ENCODE measurements at regions of chr5 and their contacts with region 1.

Region 1: DNA sequence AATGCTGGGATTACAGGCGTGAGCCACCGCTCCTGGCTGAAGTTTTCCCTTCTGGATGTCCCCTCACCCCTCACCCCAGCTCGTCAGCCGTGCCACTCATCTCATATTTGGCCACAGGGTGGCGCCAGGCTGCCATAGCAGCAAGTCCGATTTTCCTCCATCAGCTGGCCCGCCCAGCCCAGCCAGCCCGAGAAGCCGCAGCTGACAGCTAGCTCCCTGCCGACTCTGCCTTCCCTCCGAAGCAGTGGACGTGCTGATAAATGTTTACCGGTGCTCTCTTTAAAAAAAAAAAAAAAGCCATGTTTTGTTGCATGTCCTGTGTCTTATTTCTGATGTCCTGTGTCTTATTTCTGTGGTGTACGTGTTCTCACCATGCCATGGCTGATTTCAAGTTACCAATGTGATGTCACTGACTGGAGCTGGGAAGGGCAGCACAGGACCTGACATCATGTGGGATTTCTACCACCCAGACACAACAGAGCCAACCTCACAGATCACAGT is 58.3 kb downstream of the PFDN1 start:
- DNase-seq: peak; percentile 84 to 95
- H3K4me3 ChIP-seq: no peak overlapping the region
- H3K27ac ChIP-seq: no peak overlapping the region; the same call in 1 of the 2 replicates
- H3K4me1 ChIP-seq: peaks cover 6 to 17% (median 12%) of the 10 kb centered on the region in 4 experiments; a peak in 6 of 7 replicates
- H3K27me3 ChIP-seq: no peaks in the 10 kb centered on the region
- CTCF ChIP-seq: peak in 2 of 3 experiments; percentile 88 to 91; a peak in 3 of 4 replicates
- EP300 ChIP-seq: no peak
- POLR2A ChIP-seq: no peak
- RAD21 ChIP-seq: peak; percentile 91 to 95

Region 2: DNA sequence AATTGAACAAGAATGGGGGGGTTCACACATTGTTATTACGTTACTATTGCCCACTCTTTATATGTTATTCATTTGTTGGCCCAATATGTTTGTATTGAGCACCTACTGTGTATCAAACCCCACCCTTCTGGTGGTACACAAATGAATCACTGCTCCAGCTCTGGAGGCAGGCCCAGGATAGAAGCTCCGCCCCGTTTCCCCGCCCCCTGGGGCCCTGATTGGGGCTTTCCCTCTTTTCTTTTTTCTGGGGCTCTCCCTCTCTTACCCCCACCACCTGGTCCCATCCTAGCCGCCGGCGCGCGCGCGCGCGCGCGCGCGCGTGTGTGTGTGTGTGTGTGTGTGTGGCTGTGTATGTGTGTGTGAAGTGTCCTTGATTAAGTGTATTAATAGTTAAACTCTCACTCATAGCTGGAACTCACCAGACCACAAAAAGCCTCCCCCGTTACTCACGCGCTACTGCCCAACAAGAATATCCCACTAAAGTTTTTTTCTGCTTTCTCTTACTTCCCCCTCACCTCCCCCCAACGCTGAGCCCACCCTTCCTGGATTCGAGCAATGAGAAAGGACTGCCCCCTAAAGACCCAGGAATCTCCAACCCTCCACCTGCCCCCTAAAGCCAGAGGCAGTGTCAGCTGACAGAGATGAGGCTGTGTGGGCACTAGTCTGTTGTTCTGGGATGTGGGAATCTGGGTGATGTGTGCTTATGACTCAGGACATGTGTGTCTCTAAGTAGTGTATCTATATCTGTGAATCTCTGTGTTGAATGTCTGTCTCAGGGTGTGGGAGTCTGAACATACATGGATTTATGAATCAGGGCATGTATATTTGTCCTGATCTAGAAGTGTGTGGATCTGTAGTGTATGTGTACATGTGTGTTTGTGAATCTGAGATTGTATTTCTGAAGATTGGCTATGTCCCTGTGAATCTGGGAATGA is 592.5 kb before region 1 on chr5:
- CTCF ChIA-PET with region 1: no interaction called
- POLR2A ChIA-PET with region 1: no interaction called
- DNase-seq: peak in 1 of 2 experiments; percentile 90
- H3K4me3 ChIP-seq: peak overlapping the region in 3 of 4 experiments; percentile 2 to 90 (median 14); a peak in 5 of 8 replicates
- H3K27ac ChIP-seq: no peak overlapping the region
- H3K4me1 ChIP-seq: peaks cover 20 to 53% (median 50%) of the 10 kb centered on the region in 4 experiments
- H3K27me3 ChIP-seq: peaks cover 0 to 4% (median 0%) of the 10 kb centered on the region in 4 experiments; a peak in 2 of 7 replicates
- CTCF ChIP-seq: no peak
- EP300 ChIP-seq: no peak
- POLR2A ChIP-seq: no peak
- RAD21 ChIP-seq: no peak

Region 3: GRCh38 chr5:140169410-140169809 is 75.2 kb before region 1 on chr5:
- CTCF ChIA-PET with region 1: interaction called, 10 read pairs
- POLR2A ChIA-PET with region 1: interaction called, 3 read pairs
- DNase-seq: no peak
- H3K4me3 ChIP-seq: no peak overlapping the region
- H3K27ac ChIP-seq: no peak overlapping the region
- H3K4me1 ChIP-seq: peaks cover 0 to under 1% (median 0%) of the 10 kb centered on the region in 4 experiments; a peak in 3 of 7 replicates
- H3K27me3 ChIP-seq: no peaks in the 10 kb centered on the region
- CTCF ChIP-seq: peak in 2 of 3 experiments; percentile 22 to 39; a peak in 2 of 4 replicates
- EP300 ChIP-seq: no peak
- POLR2A ChIP-seq: no peak
- RAD21 ChIP-seq: peak; percentile 16 to 38; a peak in 2 of 4 replicates

Region 4: GRCh38 chr5:140207250-140207964 is 37.2 kb before region 1 on chr5:
- CTCF ChIA-PET with region 1: interaction called, 17 read pairs
- POLR2A ChIA-PET with region 1: no interaction called
- DNase-seq: no peak
- H3K4me3 ChIP-seq: no peak overlapping the region
- H3K27ac ChIP-seq: no peak overlapping the region
- H3K4me1 ChIP-seq: peaks cover 0 to 5% (median 4%) of the 10 kb centered on the region in 4 experiments; a peak in 5 of 7 replicates
- H3K27me3 ChIP-seq: no peaks in the 10 kb centered on the region
- CTCF ChIP-seq: no peak
- EP300 ChIP-seq: no peak
- POLR2A ChIP-seq: no peak
- RAD21 ChIP-seq: no peak

Region 5: GRCh38 chr5:140227048-140227447 is 17.5 kb before region 1 on chr5:
- CTCF ChIA-PET with region 1: interaction called, 99 read pairs
- POLR2A ChIA-PET with region 1: interaction called, 8 read pairs
- DNase-seq: no peak
- H3K4me3 ChIP-seq: no peak overlapping the region
- H3K27ac ChIP-seq: no peak overlapping the region
- H3K4me1 ChIP-seq: no peaks in the 10 kb centered on the region
- H3K27me3 ChIP-seq: no peaks in the 10 kb centered on the region; a peak in 1 of 7 replicates
- CTCF ChIP-seq: peak in 2 of 3 experiments; percentile 13 to 42; a peak in 3 of 4 replicates
- EP300 ChIP-seq: no peak
- POLR2A ChIP-seq: no peak
- RAD21 ChIP-seq: peak; percentile 24 to 44; a peak in 2 of 4 replicates

Region 6: DNA sequence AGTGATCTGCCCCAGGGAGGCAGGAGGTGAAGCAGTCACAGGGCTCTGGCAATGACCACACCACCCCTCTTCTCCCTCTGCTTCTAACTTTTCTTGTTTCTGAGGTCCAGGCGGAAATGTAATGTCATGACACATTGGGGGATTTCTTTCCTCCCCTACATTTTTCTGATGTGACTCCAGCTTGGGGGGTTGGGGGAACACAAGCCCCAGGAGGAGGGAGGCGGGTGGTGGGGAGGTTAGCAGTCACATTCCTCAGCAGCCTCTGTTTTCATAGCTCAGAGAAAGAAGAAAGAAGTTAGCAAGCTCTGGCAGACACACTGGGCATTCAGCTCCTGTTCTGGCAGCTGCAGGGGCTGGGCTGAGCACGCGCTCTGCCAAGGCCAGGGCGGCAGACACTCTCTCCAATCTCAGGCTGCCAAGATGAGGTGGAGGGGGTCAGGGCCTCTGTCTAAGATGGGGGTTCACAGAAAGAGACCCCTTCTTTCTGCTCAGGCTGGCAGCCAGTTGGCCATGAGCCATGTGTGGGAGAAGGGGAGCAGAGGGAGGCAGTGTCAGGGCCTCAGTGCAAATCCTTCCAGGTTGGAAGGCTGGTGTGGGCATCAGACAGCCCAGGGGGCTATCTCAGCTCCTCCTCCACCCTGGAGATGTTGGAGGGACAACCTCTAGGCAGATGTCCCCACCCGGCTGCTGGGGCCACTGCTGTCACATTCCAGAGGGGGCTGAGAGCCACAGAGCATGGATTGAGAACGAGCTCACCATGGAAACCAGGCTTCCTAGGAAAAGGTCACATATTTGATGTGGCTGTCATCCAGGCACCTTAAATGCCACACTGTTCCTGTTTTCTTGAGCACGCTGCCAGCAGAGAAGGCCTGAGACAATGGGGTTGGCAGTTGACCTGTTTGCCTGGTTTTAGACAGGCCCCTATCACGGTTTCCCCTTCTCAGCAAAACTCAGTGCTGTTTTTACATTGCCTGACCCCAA is 78.5 kb after region 1 on chr5:
- CTCF ChIA-PET with region 1: interaction called, 102 read pairs
- POLR2A ChIA-PET with region 1: no interaction called
- DNase-seq: no peak
- H3K4me3 ChIP-seq: no peak overlapping the region
- H3K27ac ChIP-seq: no peak overlapping the region
- H3K4me1 ChIP-seq: peaks cover 0 to 5% (median 0%) of the 10 kb centered on the region in 4 experiments; a peak in 3 of 7 replicates
- H3K27me3 ChIP-seq: no peaks in the 10 kb centered on the region
- CTCF ChIP-seq: no peak
- EP300 ChIP-seq: no peak
- POLR2A ChIP-seq: no peak
- RAD21 ChIP-seq: no peak

Region 7: GRCh38 chr5:140346348-140347101 is 102.0 kb after region 1 on chr5 and contains the start of gene HBEGF:
- CTCF ChIA-PET with region 1: interaction called, 676 read pairs
- POLR2A ChIA-PET with region 1: interaction called, 64 read pairs
- DNase-seq: peak; percentile 78 to 88
- H3K4me3 ChIP-seq: peak within 1 kb of the TSS; percentile 48 to 84 (median 77)
- H3K27ac ChIP-seq: no peak within 1 kb of the TSS
- H3K4me1 ChIP-seq: peaks cover 0 to 16% (median 6%) of the 10 kb centered on the region in 4 experiments; a peak in 5 of 7 replicates
- H3K27me3 ChIP-seq: peaks cover 0 to 11% (median 5%) of the 10 kb centered on the region in 4 experiments; a peak in 6 of 7 replicates
- CTCF ChIP-seq: peak; percentile 74 to 90 (median 79)
- EP300 ChIP-seq: peak in 1 of 2 experiments; percentile 46; a peak in 1 of 3 replicates
- POLR2A ChIP-seq: peak; percentile 87 to 90
- RAD21 ChIP-seq: peak; percentile 36 to 56
- total RNA-seq, gene HBEGF: 2.5 and 2.8 TPM in 2 replicates

Measured in H1 (cell line).